ENCODE measurements at regions of chr1 and their contacts with region 1.

Region 1: GRCh38 chr1:46406881-46407608 is 12.9 kb downstream of the FAAH start:
- DNase-seq: no peak
- H3K4me3 ChIP-seq: peak overlapping the region; percentile 14
- H3K27ac ChIP-seq: no peak overlapping the region
- H3K4me1 ChIP-seq: peaks cover 5% of the 10 kb centered on the region
- H3K27me3 ChIP-seq: no peaks in the 10 kb centered on the region
- CTCF ChIP-seq: no peak

Region 2: GRCh38 chr1:46458190-46458589 is 51.1 kb after region 1 on chr1:
- CTCF ChIA-PET with region 1: interaction called, 10 read pairs
- POLR2A ChIA-PET with region 1: no interaction called
- intact Hi-C with region 1: no loop called
- DNase-seq: no peak
- H3K4me3 ChIP-seq: no peak overlapping the region
- H3K27ac ChIP-seq: no peak overlapping the region
- H3K4me1 ChIP-seq: peaks cover 22% of the 10 kb centered on the region
- H3K27me3 ChIP-seq: peaks cover 3% of the 10 kb centered on the region
- CTCF ChIP-seq: no peak

Region 3: GRCh38 chr1:46538147-46538546 is 131.1 kb after region 1 on chr1:
- CTCF ChIA-PET with region 1: interaction called, 11 read pairs
- POLR2A ChIA-PET with region 1: no interaction called
- intact Hi-C with region 1: no loop called
- DNase-seq: no peak
- H3K4me3 ChIP-seq: no peak overlapping the region
- H3K27ac ChIP-seq: no peak overlapping the region
- H3K4me1 ChIP-seq: no peaks in the 10 kb centered on the region
- H3K27me3 ChIP-seq: peaks cover 56% of the 10 kb centered on the region
- CTCF ChIP-seq: no peak

Measured in A673 (cell line).